Adrenal gland (tissue), 19 donors: ENCODE measurements at regions of chr7 and their contacts with region 1.

Region 1: GRCh38 chr7:5083311-5083711 is 37.7 kb downstream of the RBAK start:
- DNase-seq: no peak
- H3K4me3 ChIP-seq: no peak overlapping the region
- H3K27ac ChIP-seq: no peak overlapping the region
- H3K4me1 ChIP-seq: peaks cover 0 to 6% of the 10 kb centered on the region in 2 donors
- H3K27me3 ChIP-seq: no peaks in the 10 kb centered on the region
- CTCF ChIP-seq: no peak
- POLR2A ChIP-seq: no peak

Region 2: GRCh38 chr7:4797858-4798705 is 285.2 kb before region 1 on chr7:
- intact Hi-C with region 1: loop called (anchors 2 to 5 kb)
- DNase-seq: peak in 3 of 7 donors; percentile 41 to 70 (median 44)
- H3K4me3 ChIP-seq: no peak overlapping the region
- H3K27ac ChIP-seq: no peak overlapping the region
- H3K4me1 ChIP-seq: peaks cover under 1% of the 10 kb centered on the region in 2 donors
- H3K27me3 ChIP-seq: no peaks in the 10 kb centered on the region
- CTCF ChIP-seq: peak; percentile 41 to 82 (median 66)
- POLR2A ChIP-seq: no peak

Region 3: GRCh38 chr7:4939971-4940728 is 143.2 kb before region 1 on chr7:
- intact Hi-C with region 1: no loop called
- DNase-seq: peak in 3 of 7 donors; percentile 13 to 36 (median 17)
- H3K4me3 ChIP-seq: no peak overlapping the region
- H3K27ac ChIP-seq: no peak overlapping the region
- H3K4me1 ChIP-seq: no peaks in the 10 kb centered on the region
- H3K27me3 ChIP-seq: no peaks in the 10 kb centered on the region
- CTCF ChIP-seq: no peak
- POLR2A ChIP-seq: no peak

Region 4: DNA sequence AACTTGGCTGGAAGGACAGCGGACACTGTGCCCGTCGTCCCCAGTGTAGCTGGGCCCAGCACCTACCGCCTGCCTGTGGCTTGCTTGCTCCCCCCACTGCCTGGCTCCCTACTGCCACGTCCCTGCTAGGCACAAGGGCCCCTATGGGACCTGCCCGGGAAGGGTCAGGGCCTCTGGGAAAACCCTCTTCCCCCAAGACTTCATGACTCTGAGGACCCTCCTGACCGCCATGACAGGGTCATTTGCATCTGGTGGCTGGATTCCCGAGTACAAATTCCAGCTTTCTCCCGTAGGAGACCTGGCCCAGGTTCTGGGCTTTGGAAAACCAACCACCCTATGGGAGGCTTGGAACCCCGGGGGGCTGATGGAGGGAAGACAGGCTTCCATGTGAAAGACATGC is 122.9 kb before region 1 on chr7:
- intact Hi-C with region 1: loop called in 1 of 2 experiments (anchors 10 kb)
- DNase-seq: no peak
- H3K4me3 ChIP-seq: no peak overlapping the region
- H3K27ac ChIP-seq: no peak overlapping the region
- H3K4me1 ChIP-seq: peaks cover 4 to 8% of the 10 kb centered on the region in 2 donors
- H3K27me3 ChIP-seq: peaks cover 20% of the 10 kb centered on the region
- CTCF ChIP-seq: no peak
- POLR2A ChIP-seq: no peak